Right ventricle myocardium inferior (tissue), 1 donor: ENCODE measurements at regions of chr2 and their contacts with region 1.

Region 1: GRCh38 chr2:222860740-222861410 is at the start of gene ACSL3:
- DNase-seq: peak; percentile 99
- ATAC-seq: peak; percentile 98
- total RNA-seq, gene ACSL3: 50.3 TPM

Region 2: GRCh38 chr2:222707689-222708525 is 153.0 kb before region 1 on chr2:
- intact Hi-C with region 1: loop called (anchors 1 kb)
- DNase-seq: peak; percentile 94
- ATAC-seq: peak; percentile 58

Region 3: DNA sequence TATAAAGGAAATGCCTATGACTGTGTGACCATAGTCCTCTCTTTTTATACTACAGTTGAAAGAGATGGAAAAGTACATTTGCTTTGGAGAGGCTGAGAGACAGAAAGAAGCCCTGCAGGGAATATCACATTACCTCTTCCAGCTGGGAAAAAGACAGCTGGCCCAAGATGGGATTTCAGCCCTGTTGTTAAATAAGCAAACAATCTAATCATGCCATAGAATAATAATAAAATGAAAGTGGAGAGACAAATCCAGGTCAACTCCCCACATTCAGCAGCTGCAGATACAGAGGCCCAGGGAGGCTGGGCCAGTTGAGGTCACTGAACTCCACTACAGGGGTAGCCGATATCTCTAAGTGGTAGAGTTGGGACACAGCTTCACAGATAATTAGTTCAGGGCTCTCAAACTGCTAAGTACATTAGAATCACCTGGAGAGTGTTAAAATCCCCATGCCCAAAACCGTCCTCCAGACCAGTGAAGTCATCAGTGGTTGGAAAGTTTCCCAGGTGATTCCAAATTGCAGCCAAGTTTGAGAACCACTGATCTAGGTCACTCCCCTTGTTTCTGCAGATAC is 107.5 kb before region 1 on chr2:
- intact Hi-C with region 1: loop called (anchors 2 kb)
- DNase-seq: no peak
- ATAC-seq: peak; percentile 96

Region 4: GRCh38 chr2:222797261-222797660 is 63.6 kb before region 1 on chr2:
- intact Hi-C with region 1: loop called (anchors 2 kb)
- DNase-seq: no peak
- ATAC-seq: no peak

Region 5: GRCh38 chr2:222903234-222904220 is 42.7 kb after region 1 on chr2:
- intact Hi-C with region 1: loop called (anchors 5 kb)
- DNase-seq: peak; percentile 62
- ATAC-seq: peak; percentile 69